Naive thymus-derived CD4-positive, alpha-beta T cell (primary cell): ENCODE measurements at regions of chr4 and their contacts with region 1.

Region 1: GRCh38 chr4:7939377-7940108 is at the start of gene AFAP1:
- DNase-seq: peak; percentile 84 to 95 (median 89)
- ATAC-seq: peak; percentile 95
- H3K4me3 ChIP-seq: peak within 1 kb of the TSS; percentile 68
- H3K4me3 Mint-ChIP-seq: peak within 1 kb of the TSS; percentile 64 to 91 (median 74)
- H3K27ac ChIP-seq: peak within 1 kb of the TSS; percentile 78
- H3K27ac Mint-ChIP-seq: peak within 1 kb of the TSS in 4 of 9 donors; percentile 63 to 89 (median 74)
- H3K4me1 ChIP-seq: peaks cover 10 to 12% of the 10 kb centered on the region in 2 donors
- H3K4me1 Mint-ChIP-seq: peaks cover 16 to 42% (median 33%) of the 10 kb centered on the region in 7 donors
- H3K27me3 ChIP-seq: no peaks in the 10 kb centered on the region
- H3K27me3 Mint-ChIP-seq: peaks cover 0 to 30% (median 0%) of the 10 kb centered on the region in 5 donors
- total RNA-seq, gene AFAP1: 8.6 to 27.2 (median 13.3) TPM

Region 2: DNA sequence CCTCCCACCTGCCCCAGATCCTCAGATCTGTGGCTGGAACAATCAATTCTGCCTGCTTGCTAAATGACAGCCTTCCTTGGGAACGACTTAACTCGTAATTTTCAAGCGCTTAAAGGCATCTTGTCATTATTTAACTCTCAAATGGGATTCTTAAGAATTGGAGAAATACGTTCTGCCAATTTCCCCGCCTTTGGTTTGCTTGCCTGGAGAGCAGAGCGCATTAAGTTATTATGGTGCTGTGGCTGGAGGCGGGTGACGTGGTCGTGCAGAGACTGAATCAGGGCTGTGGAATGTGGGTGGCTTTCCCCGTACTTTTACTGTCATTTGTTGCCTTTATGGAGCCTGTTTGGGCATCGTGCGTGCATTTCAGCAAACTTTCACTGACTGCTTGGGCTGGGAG is 425.9 kb before region 1 on chr4:
- CTCF ChIA-PET with region 1: no interaction called
- POLR2A ChIA-PET with region 1: no interaction called
- intact Hi-C with region 1: no loop called
- DNase-seq: no peak
- ATAC-seq: no peak
- H3K4me3 ChIP-seq: no peak overlapping the region
- H3K4me3 Mint-ChIP-seq: no peak overlapping the region
- H3K27ac ChIP-seq: no peak overlapping the region
- H3K27ac Mint-ChIP-seq: peak overlapping the region in 1 of 9 donors; percentile 53
- H3K4me1 ChIP-seq: no peaks in the 10 kb centered on the region
- H3K4me1 Mint-ChIP-seq: peaks cover 0 to 6% (median 0%) of the 10 kb centered on the region in 7 donors
- H3K27me3 ChIP-seq: no peaks in the 10 kb centered on the region
- H3K27me3 Mint-ChIP-seq: peaks cover 6 to 55% (median 27%) of the 10 kb centered on the region in 5 donors

Region 3: DNA sequence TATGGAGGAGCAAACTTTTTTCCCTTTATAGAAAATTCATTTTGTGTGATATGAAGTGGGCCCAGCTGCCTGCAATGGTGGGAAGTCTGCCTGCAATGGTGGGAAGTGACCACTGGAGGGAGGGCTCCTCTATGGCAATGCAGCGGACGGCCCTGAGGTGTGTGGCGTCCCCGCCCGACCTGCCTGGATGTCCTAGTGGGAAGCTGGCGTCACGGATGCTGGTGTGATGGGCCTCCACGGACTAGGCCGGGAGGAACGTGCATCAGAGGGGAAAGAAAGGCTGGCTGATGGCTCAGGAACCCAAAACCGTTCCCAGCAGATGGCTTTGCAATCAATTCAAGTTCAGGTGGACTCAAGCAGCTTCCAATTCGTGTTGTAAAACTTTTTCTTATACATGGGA is 177.8 kb before region 1 on chr4:
- CTCF ChIA-PET with region 1: no interaction called
- POLR2A ChIA-PET with region 1: no interaction called
- intact Hi-C with region 1: loop called in 1 of 2 experiments (anchors 1 kb)
- DNase-seq: peak in 8 of 9 donors; percentile 33 to 65 (median 52)
- ATAC-seq: peak; percentile 74
- H3K4me3 ChIP-seq: no peak overlapping the region
- H3K4me3 Mint-ChIP-seq: peak overlapping the region in 5 of 10 donors; percentile 27 to 49 (median 37)
- H3K27ac ChIP-seq: peak overlapping the region; percentile 10
- H3K27ac Mint-ChIP-seq: peak overlapping the region; percentile 47 to 100 (median 92)
- H3K4me1 ChIP-seq: peaks cover 18 to 30% of the 10 kb centered on the region in 2 donors
- H3K4me1 Mint-ChIP-seq: peaks cover 13 to 49% (median 37%) of the 10 kb centered on the region in 7 donors
- H3K27me3 ChIP-seq: no peaks in the 10 kb centered on the region
- H3K27me3 Mint-ChIP-seq: no peaks in the 10 kb centered on the region

Region 4: GRCh38 chr4:7857238-7857701 is 82.3 kb before region 1 on chr4:
- CTCF ChIA-PET with region 1: interaction called, 7 read pairs
- POLR2A ChIA-PET with region 1: interaction called, 24 read pairs
- intact Hi-C with region 1: loop called (anchors 1 kb)
- DNase-seq: no peak
- ATAC-seq: no peak
- H3K4me3 ChIP-seq: no peak overlapping the region
- H3K4me3 Mint-ChIP-seq: peak overlapping the region in 8 of 10 donors; percentile 17 to 73 (median 44)
- H3K27ac ChIP-seq: no peak overlapping the region
- H3K27ac Mint-ChIP-seq: peak overlapping the region in 8 of 9 donors; percentile 21 to 96 (median 90)
- H3K4me1 ChIP-seq: peaks cover 29 to 48% of the 10 kb centered on the region in 2 donors
- H3K4me1 Mint-ChIP-seq: peaks cover 36 to 74% (median 66%) of the 10 kb centered on the region in 7 donors
- H3K27me3 ChIP-seq: no peaks in the 10 kb centered on the region
- H3K27me3 Mint-ChIP-seq: no peaks in the 10 kb centered on the region

Region 5: DNA sequence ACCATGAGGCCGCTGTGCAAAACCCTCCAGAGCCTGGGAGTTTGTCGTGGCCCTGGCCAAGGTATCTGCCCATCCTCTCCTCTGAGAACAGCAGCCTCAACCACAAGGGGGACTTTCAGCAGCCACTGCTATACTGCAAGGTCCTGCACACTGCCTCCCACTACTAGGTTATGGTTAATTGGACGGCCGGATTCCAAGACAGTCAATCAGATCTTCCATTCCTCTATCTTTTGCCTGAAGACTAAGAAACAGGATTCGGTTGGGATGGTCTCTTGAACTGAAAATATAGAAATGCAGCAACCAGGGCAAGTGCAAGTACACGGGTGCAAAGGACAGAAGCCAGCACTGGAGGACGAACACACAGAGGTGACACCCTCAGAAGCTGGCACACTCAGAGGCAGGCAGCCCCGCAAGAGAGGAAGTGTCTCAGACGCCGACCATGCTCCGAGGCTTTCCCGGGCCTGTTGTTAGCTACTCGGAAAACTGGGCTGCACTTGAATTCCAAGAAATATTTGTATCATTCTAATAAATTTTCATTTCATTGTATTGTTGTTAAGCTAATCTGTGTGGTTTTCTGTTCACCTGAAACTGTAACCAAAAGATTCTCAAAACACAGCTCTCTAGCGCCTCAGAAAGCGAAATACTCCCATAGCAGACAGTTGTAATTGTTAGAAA is 63.2 kb before region 1 on chr4:
- CTCF ChIA-PET with region 1: interaction called, 3 read pairs
- POLR2A ChIA-PET with region 1: interaction called, 14 read pairs
- intact Hi-C with region 1: loop called in 1 of 2 experiments (anchors 1 kb)
- DNase-seq: peak in 3 of 9 donors; percentile 11 to 21 (median 15)
- ATAC-seq: peak; percentile 64
- H3K4me3 ChIP-seq: peak overlapping the region; percentile 15
- H3K4me3 Mint-ChIP-seq: peak overlapping the region; percentile 8 to 78 (median 66)
- H3K27ac ChIP-seq: peak overlapping the region; percentile 44
- H3K27ac Mint-ChIP-seq: peak overlapping the region; percentile 56 to 98 (median 80)
- H3K4me1 ChIP-seq: peaks cover 5 to 22% of the 10 kb centered on the region in 2 donors
- H3K4me1 Mint-ChIP-seq: peaks cover 19 to 82% (median 72%) of the 10 kb centered on the region in 7 donors
- H3K27me3 ChIP-seq: no peaks in the 10 kb centered on the region
- H3K27me3 Mint-ChIP-seq: no peaks in the 10 kb centered on the region

Region 6: GRCh38 chr4:7929118-7929951 is 10.2 kb before region 1 on chr4:
- CTCF ChIA-PET with region 1: no interaction called
- POLR2A ChIA-PET with region 1: interaction called, 3 read pairs
- intact Hi-C with region 1: loop called (anchors 1 kb)
- DNase-seq: no peak
- ATAC-seq: no peak
- H3K4me3 ChIP-seq: no peak overlapping the region
- H3K4me3 Mint-ChIP-seq: peak overlapping the region in 2 of 10 donors; percentile 47 to 48
- H3K27ac ChIP-seq: no peak overlapping the region
- H3K27ac Mint-ChIP-seq: peak overlapping the region in 2 of 9 donors; percentile 26 to 36
- H3K4me1 ChIP-seq: peaks cover 0 to 3% of the 10 kb centered on the region in 2 donors
- H3K4me1 Mint-ChIP-seq: peaks cover 7 to 63% (median 49%) of the 10 kb centered on the region in 7 donors
- H3K27me3 ChIP-seq: no peaks in the 10 kb centered on the region
- H3K27me3 Mint-ChIP-seq: no peaks in the 10 kb centered on the region

Region 7: GRCh38 chr4:7973545-7973981 is 34.0 kb after region 1 on chr4:
- CTCF ChIA-PET with region 1: interaction called, 4 read pairs
- POLR2A ChIA-PET with region 1: interaction called, 6 read pairs
- intact Hi-C with region 1: loop called (anchors 1 kb)
- DNase-seq: no peak
- ATAC-seq: no peak
- H3K4me3 ChIP-seq: no peak overlapping the region
- H3K4me3 Mint-ChIP-seq: peak overlapping the region in 1 of 10 donors; percentile 5
- H3K27ac ChIP-seq: no peak overlapping the region
- H3K27ac Mint-ChIP-seq: peak overlapping the region in 6 of 9 donors; percentile 43 to 100 (median 77)
- H3K4me1 ChIP-seq: peaks cover 16 to 37% of the 10 kb centered on the region in 2 donors
- H3K4me1 Mint-ChIP-seq: peaks cover 24 to 51% (median 33%) of the 10 kb centered on the region in 7 donors
- H3K27me3 ChIP-seq: no peaks in the 10 kb centered on the region
- H3K27me3 Mint-ChIP-seq: peaks cover 0 to under 1% (median 0%) of the 10 kb centered on the region in 5 donors

Region 8: DNA sequence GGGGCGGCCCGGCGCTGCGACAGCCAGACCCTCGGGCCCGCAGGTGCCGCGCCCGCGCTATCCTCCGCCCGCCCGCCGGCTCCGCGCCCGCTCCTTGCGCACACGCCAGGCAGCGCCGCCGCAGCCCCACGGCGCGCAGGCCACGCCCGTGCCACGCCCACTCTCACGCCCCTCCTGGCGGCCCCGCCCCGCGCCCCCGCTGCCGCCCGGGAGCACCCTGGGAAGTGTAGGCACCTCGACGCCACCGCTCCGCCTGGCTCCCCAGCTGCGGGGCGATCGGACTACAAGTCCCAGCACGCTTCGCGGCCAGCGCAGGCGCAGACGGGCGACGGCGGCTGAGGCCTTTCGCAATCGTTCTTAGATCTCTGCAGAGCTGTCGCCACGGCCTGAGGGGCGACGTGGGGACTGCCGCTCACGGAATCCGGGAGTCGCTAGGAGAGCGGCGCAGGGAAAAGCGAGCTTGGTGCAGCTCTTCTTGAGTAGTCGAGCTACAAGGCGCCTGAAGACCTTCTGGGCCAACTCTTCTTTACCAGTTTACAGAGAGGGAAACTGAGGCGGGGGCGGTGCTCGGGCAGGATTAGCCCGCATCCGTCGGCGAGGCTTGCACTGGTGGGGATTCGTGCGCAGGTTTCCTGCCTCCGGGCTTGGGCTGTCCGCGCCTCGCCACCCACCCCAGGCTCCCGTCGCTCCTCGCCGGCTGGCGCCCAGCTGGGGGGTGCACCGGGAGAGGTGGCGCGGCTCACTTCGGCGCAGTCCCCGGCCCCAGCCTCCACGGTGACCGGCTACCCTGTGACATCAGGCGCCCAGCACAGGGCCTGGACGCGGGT is 219.4 kb after region 1 on chr4 and contains the start of gene ABLIM2:
- CTCF ChIA-PET with region 1: no interaction called
- POLR2A ChIA-PET with region 1: no interaction called
- intact Hi-C with region 1: loop called (anchors 1 to 2 kb)
- DNase-seq: peak; percentile 96 to 100 (median 100)
- ATAC-seq: peak; percentile 100
- H3K4me3 ChIP-seq: peak within 1 kb of the TSS; percentile 95
- H3K4me3 Mint-ChIP-seq: peak within 1 kb of the TSS; percentile 92 to 100 (median 97)
- H3K27ac ChIP-seq: peak within 1 kb of the TSS; percentile 77
- H3K27ac Mint-ChIP-seq: peak within 1 kb of the TSS; percentile 84 to 96 (median 91)
- H3K4me1 ChIP-seq: peaks cover 10 to 13% of the 10 kb centered on the region in 2 donors
- H3K4me1 Mint-ChIP-seq: peaks cover 7 to 25% (median 18%) of the 10 kb centered on the region in 7 donors
- H3K27me3 ChIP-seq: no peaks in the 10 kb centered on the region
- H3K27me3 Mint-ChIP-seq: peaks cover 0 to 31% (median 4%) of the 10 kb centered on the region in 5 donors
- total RNA-seq, gene ABLIM2: 0.22 to 4.9 (median 3.1) TPM